Activated naive CD8-positive, alpha-beta T cell treated with anti-CD3 and anti-CD28 coated beads, Interleukin-2, amount 10 ng/mL, durations not matched to agents 7 days and 5 days (primary cell): ENCODE measurements at regions of chr10 and their contacts with region 1.

Region 1: DNA sequence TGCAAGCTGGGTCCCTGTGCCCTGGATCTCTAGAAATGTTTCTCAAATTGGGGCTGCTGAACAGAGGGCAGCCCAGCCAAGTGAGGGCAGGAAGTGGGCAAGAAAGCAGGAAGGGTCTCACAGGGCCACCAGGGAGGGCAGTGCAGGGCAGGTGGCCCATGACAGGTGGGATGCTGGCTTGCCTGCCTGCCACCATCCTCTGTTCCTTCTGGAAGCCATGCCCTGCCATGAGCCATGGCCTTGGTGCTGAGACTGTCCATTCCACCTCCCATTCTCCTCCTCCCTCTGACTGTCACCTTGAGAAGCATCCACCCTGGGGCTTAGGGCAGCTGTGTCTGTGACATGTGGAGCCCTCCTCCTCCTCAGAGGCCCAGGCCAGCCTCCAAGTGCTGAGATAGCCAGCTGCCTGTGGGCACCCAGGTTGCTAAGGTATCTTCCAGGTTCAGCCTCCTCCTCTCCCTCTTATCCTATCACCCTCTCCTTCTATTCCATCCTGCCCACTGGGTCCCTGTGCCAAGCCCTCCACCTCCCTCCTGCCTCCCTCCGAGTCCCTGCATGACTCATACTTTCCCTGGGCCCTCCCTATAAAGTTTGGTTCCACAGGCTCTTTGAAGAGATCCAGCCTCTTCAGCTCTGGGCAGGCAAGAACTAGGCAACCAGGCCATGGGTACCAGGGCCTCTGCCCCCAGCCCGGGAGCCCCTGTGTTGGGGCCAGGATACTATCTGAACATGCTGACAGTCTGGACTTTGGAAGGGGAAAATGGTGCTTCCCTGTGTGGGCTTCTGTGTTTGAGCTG is 1.3 kb downstream of the VSIR start:
- DNase-seq: no peak
- ATAC-seq: no peak
- H3K4me3 Mint-ChIP-seq: peak overlapping the region; percentile 91
- H3K27ac Mint-ChIP-seq: peak overlapping the region; percentile 89
- H3K4me1 Mint-ChIP-seq: peaks cover 70% of the 10 kb centered on the region
- H3K27me3 Mint-ChIP-seq: no peaks in the 10 kb centered on the region

Region 2: DNA sequence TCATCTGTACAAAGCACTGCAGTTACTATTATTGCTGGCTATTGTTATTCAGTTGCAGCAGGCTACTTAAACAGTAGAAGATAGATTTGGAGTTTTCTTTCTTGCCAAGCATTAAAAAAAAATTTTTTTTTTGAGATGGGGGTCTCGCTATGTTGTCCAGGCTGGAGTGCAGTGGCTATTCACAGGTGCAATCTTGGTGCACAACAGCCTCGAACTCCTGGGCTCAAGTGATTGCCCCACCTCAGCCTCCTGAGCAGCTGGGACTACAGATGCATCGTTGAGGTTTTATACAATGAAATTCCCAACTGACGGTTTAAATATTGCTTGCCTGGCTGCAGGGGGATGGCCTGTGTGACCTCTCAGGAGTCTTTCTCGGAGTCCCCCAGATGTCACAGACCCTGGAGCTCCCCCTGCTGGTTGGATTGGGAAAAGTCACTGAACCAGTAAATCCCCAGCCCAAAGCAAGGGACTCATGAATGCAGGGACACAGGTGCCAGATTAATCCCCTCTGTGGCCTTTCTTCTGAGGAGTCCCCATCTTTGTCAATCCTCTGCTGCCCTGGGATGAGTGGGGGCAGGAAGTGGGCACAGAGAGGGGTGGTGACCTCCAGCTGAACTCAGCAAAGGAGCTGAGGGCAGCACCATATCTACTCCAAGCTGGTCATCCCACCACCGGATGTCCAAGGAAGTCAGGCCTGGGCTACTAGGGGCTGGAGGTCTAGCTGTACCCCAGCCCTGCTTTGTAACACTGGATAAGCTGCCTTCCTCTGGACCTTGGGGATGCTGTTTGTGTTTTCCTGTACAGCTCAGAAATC is 202.0 kb before region 1 on chr10:
- POLR2A ChIA-PET with region 1: no interaction called
- DNase-seq: peak; percentile 73
- ATAC-seq: peak; percentile 55
- H3K4me3 Mint-ChIP-seq: no peak overlapping the region
- H3K27ac Mint-ChIP-seq: no peak overlapping the region
- H3K4me1 Mint-ChIP-seq: peaks cover 4% of the 10 kb centered on the region
- H3K27me3 Mint-ChIP-seq: peaks cover 3% of the 10 kb centered on the region

Region 3: DNA sequence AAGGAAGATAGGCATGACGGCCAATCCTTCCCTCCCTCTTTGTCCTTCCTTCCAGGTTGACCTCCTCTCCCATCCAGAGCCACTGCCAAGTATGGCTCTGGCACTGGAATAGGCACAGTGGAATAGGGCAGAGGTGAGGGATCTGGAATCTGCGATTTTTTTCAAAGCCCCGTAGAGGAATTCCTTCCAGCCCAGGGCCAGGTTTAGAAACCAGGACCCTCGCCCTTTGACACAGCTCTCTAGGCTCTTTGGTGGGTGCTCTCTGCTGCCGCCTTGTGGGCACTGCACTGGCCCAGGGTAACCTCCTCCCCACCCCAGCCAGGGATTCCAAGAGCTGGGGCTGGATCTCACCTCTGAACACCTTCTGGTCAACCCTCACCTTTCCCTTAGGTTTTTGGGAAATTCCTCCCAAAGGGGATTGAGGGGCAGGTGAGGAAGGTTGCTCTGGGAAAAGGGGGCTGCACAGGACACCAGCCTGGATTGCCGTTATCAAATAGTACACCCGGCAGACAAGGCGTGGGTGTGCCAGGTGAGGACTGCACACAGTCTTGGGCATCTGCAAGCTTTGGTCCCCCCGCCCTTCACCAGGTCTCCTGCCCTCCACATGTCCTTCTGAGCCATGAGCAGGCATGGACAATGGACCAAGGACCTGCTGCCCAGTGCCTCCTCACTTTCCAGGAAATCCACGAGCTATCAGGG is 75.2 kb before region 1 on chr10:
- POLR2A ChIA-PET with region 1: interaction called, 27 read pairs
- DNase-seq: peak; percentile 78
- ATAC-seq: peak; percentile 55
- H3K4me3 Mint-ChIP-seq: no peak overlapping the region
- H3K27ac Mint-ChIP-seq: no peak overlapping the region
- H3K4me1 Mint-ChIP-seq: peaks cover 36% of the 10 kb centered on the region
- H3K27me3 Mint-ChIP-seq: no peaks in the 10 kb centered on the region

Region 4: GRCh38 chr10:71713135-71714030 is 58.6 kb before region 1 on chr10:
- POLR2A ChIA-PET with region 1: interaction called, 22 read pairs
- DNase-seq: peak; percentile 68
- ATAC-seq: peak; percentile 69
- H3K4me3 Mint-ChIP-seq: peak overlapping the region; percentile 87
- H3K27ac Mint-ChIP-seq: peak overlapping the region; percentile 96
- H3K4me1 Mint-ChIP-seq: peaks cover 36% of the 10 kb centered on the region
- H3K27me3 Mint-ChIP-seq: no peaks in the 10 kb centered on the region

Region 5: GRCh38 chr10:71740069-71740468 is 31.9 kb before region 1 on chr10:
- POLR2A ChIA-PET with region 1: interaction called, 71 read pairs
- DNase-seq: no peak
- ATAC-seq: no peak
- H3K4me3 Mint-ChIP-seq: peak overlapping the region; percentile 5
- H3K27ac Mint-ChIP-seq: peak overlapping the region; percentile 93
- H3K4me1 Mint-ChIP-seq: peaks cover 83% of the 10 kb centered on the region
- H3K27me3 Mint-ChIP-seq: no peaks in the 10 kb centered on the region

Region 6: DNA sequence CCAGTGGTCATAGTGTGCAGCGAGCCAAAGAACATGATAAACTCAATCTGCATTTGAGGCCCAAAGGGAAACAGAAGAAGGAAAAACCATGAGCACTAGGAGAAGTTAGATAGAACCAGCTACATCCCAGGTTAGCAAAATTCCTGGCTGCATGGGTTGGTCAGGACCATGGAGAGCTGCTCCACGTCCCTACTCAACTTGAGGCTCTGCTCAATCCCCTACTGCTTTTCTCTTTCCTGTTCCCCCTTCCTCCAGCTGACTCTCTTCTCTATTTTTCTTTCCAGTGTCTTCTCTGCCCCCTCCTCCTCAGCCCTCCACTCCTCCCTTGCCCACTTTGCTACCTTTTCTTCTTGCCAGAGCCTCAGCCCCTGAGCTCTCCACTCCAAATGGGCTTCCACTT is 23.2 kb after region 1 on chr10:
- POLR2A ChIA-PET with region 1: no interaction called
- DNase-seq: no peak
- ATAC-seq: no peak
- H3K4me3 Mint-ChIP-seq: no peak overlapping the region
- H3K27ac Mint-ChIP-seq: no peak overlapping the region
- H3K4me1 Mint-ChIP-seq: peaks cover 29% of the 10 kb centered on the region
- H3K27me3 Mint-ChIP-seq: peaks cover 6% of the 10 kb centered on the region

Region 7: DNA sequence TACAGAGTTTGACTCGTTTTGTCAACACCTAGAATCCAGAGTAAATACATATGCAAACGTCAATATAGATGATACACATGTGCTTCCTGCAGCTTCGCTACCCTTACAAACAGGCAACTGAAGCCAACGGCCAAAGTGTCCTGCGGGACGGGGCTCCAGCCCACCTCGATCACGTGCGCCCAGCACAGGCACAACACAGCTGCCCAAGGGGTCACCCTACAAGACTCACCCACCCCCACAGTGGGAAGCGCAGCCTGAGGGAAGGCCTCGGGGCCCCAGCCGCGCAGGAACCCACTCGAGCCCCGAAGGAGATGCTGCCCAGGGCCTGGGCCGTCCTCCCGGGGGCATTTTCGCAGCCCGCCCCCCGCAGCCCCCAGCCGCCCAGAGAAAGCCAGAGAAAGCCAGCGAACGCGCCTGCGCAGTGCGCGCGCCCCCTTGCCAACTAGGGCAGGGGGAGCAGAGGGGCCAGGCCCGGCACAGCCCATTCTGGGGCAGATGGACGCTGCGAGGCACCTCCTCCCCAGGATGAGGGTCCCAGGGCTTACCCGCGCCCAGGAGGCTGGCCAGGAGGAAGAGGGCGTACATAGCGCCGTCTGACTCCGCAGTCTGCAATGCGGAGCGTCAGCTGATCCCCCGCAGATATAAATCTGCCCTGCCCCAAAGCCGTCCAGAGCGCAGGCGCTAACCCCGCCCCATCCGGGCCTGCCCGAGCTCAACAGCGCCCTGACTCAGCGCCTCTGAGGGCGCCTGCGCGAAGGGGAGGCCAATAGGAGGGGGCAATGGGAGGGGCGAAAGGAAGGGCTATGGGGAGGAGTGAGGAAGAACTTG is 78.8 kb after region 1 on chr10 and contains the start of gene PSAP:
- POLR2A ChIA-PET with region 1: interaction called, 17 read pairs
- DNase-seq: peak; percentile 99
- ATAC-seq: peak; percentile 99
- H3K4me3 Mint-ChIP-seq: peak within 1 kb of the TSS; percentile 92
- H3K27ac Mint-ChIP-seq: peak within 1 kb of the TSS; percentile 75
- H3K4me1 Mint-ChIP-seq: peaks cover 35% of the 10 kb centered on the region
- H3K27me3 Mint-ChIP-seq: peaks cover 3% of the 10 kb centered on the region
- total RNA-seq, gene PSAP: 171 to 175 TPM